ENCODE measurements at regions of chr22 and their contacts with region 1.

Region 1: GRCh38 chr22:39266398-39267030 is 21.7 kb upstream of the PDGFB start:
- DNase-seq: peak; percentile 75
- H3K4me3 Mint-ChIP-seq: no peak overlapping the region
- H3K27ac Mint-ChIP-seq: peak overlapping the region; percentile 66
- H3K4me1 Mint-ChIP-seq: peaks cover 12% of the 10 kb centered on the region
- H3K27me3 Mint-ChIP-seq: no peaks in the 10 kb centered on the region

Region 2: GRCh38 chr22:38569972-38570778 is 696.3 kb before region 1 on chr22 and contains the start of gene DMC1:
- CTCF ChIA-PET with region 1: no interaction called
- intact Hi-C with region 1: no loop called
- DNase-seq: peak; percentile 99
- H3K4me3 Mint-ChIP-seq: peak within 1 kb of the TSS; percentile 81
- H3K27ac Mint-ChIP-seq: peak within 1 kb of the TSS; percentile 95
- H3K4me1 Mint-ChIP-seq: peaks cover 11% of the 10 kb centered on the region
- H3K27me3 Mint-ChIP-seq: no peaks in the 10 kb centered on the region
- total RNA-seq, gene DMC1: 13.0 to 16.3 TPM

Region 3: GRCh38 chr22:39253435-39254070 is 13.0 kb before region 1 on chr22:
- CTCF ChIA-PET with region 1: no interaction called
- intact Hi-C with region 1: loop called (anchors 2 kb)
- DNase-seq: peak; percentile 68
- H3K4me3 Mint-ChIP-seq: no peak overlapping the region
- H3K27ac Mint-ChIP-seq: no peak overlapping the region
- H3K4me1 Mint-ChIP-seq: peaks cover 26% of the 10 kb centered on the region
- H3K27me3 Mint-ChIP-seq: peaks cover 8% of the 10 kb centered on the region

Region 4: DNA sequence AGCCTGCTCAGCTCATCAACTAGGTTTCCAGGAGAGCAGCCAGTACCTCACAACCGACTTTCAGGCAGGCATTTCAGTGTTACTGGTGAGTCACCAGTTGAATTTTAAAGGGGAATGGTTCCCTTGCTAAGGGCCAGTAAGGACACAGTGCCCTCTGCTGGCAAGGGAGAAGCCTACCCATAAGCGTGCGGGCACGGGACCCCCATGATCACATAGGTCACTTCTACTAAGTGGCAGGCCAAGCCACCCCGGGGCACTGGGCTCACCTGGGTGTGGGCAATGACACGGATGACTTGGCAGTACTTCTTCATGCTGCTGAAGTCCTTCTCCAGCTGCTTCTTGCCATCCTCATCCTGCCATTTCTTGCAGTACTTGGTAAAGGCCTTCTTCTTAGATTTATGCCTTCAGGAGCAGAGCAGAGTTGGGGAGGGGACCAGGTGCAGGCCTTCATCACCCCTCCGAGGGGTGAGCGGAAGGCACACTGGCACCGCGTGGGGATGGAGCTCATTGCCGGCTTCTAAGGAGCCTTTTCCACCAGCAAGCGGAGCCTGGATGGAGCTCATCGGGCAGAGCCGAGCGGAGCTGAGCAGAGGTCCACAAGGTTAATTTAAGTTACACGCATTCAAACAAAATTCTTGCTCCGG is 50.0 kb after region 1 on chr22:
- CTCF ChIA-PET with region 1: no interaction called
- intact Hi-C with region 1: no loop called
- DNase-seq: peak; percentile 91
- H3K4me3 Mint-ChIP-seq: peak overlapping the region; percentile 99
- H3K27ac Mint-ChIP-seq: peak overlapping the region; percentile 100
- H3K4me1 Mint-ChIP-seq: peaks cover 44% of the 10 kb centered on the region
- H3K27me3 Mint-ChIP-seq: no peaks in the 10 kb centered on the region